ENCODE measurements at regions of chr4 and their contacts with region 1.

Region 1: GRCh38 chr4:76949276-76950051 is at the start of gene SEPTIN11:
- DNase-seq: peak; percentile 93
- ATAC-seq: peak; percentile 82
- H3K4me3 ChIP-seq: peak within 1 kb of the TSS; percentile 57
- H3K27ac ChIP-seq: peak within 1 kb of the TSS; percentile 89
- H3K4me1 ChIP-seq: peaks cover 5% of the 10 kb centered on the region
- H3K27me3 ChIP-seq: no peaks in the 10 kb centered on the region
- CTCF ChIP-seq: no peak
- POLR2A ChIP-seq: peak; percentile 98
- RAD21 ChIP-seq: peak; percentile 17; the same call in 1 of the 2 replicates
- total RNA-seq, gene SEPTIN11: 573 and 632 TPM in 2 replicates

Region 2: GRCh38 chr4:76377911-76378310 is 571.6 kb before region 1 on chr4:
- CTCF ChIA-PET with region 1: no interaction called
- POLR2A ChIA-PET with region 1: no interaction called
- dilution Hi-C with region 1: no loop called
- in situ Hi-C with region 1: no loop called
- intact Hi-C with region 1: no loop called
- DNase-seq: peak; percentile 61
- ATAC-seq: peak; percentile 79
- H3K4me3 ChIP-seq: no peak overlapping the region
- H3K27ac ChIP-seq: no peak overlapping the region
- H3K4me1 ChIP-seq: no peaks in the 10 kb centered on the region
- H3K27me3 ChIP-seq: peaks cover 8% of the 10 kb centered on the region
- CTCF ChIP-seq: peak; percentile 69
- POLR2A ChIP-seq: no peak
- RAD21 ChIP-seq: peak; percentile 61

Region 3: DNA sequence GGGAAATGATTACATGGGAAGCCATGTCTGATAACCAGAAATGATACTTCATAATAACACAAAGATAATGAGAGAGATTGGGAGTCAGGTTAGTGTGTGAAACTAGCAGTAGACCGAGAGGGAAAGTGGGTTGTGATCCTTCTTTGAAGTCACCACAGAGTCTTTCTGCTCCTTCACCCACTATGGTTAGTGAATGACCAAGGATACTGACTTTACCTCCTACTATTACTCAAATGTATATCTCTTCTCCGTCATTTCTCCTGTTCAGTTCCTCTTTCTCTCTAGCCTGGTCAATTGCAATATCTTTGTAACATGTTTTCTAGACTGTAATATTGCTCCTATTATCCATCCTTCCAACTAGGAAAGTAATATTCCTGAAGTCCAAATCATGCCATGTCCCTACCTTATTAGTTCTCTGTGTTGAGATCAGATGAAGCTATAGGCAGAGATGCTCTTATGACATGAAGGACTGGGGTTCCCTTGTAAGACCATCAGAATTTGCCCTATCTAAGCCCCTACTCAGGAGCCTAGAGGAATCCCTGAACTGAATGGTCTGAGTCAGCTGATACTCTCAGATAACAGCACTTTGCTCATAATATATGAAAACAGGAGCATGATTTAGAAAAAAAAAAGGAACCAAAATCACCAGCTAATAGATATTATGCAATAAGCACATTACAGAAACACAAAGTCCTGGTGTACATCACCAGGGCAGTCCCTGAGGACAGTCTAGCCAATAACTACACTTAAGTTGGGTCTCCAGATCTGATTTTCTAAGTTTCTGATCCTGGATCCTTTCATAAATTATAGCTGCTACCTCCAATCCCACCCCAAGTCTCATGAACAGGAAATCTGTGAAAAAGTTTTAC is 433.3 kb before region 1 on chr4:
- CTCF ChIA-PET with region 1: no interaction called
- POLR2A ChIA-PET with region 1: no interaction called
- dilution Hi-C with region 1: no loop called
- in situ Hi-C with region 1: loop called (anchors 10 kb)
- intact Hi-C with region 1: loop called (anchors 1 kb)
- DNase-seq: no peak
- ATAC-seq: no peak
- H3K4me3 ChIP-seq: no peak overlapping the region
- H3K27ac ChIP-seq: no peak overlapping the region
- H3K4me1 ChIP-seq: 0 out of 2 replicates have a peak, but pooled peaks cover 1% of the 10 kb centered on the region
- H3K27me3 ChIP-seq: no peaks in the 10 kb centered on the region
- CTCF ChIP-seq: no peak
- POLR2A ChIP-seq: no peak
- RAD21 ChIP-seq: no peak

Region 4: GRCh38 chr4:76689241-76689817 is 260.1 kb before region 1 on chr4:
- CTCF ChIA-PET with region 1: no interaction called
- POLR2A ChIA-PET with region 1: no interaction called
- dilution Hi-C with region 1: no loop called
- in situ Hi-C with region 1: no loop called
- intact Hi-C with region 1: loop called (anchors 5 kb)
- DNase-seq: peak; percentile 28
- ATAC-seq: peak; percentile 92
- H3K4me3 ChIP-seq: peak overlapping the region; percentile 97
- H3K27ac ChIP-seq: peak overlapping the region; percentile 99
- H3K4me1 ChIP-seq: peaks cover 12% of the 10 kb centered on the region
- H3K27me3 ChIP-seq: no peaks in the 10 kb centered on the region
- CTCF ChIP-seq: peak; percentile 3; the same call in 1 of the 2 replicates
- POLR2A ChIP-seq: peak; percentile 30; the same call in 1 of the 2 replicates
- RAD21 ChIP-seq: peak; percentile 26; the same call in 1 of the 2 replicates

Region 5: GRCh38 chr4:76781698-76782595 is 167.5 kb before region 1 on chr4:
- CTCF ChIA-PET with region 1: no interaction called
- POLR2A ChIA-PET with region 1: interaction called, 4 read pairs
- dilution Hi-C with region 1: no loop called
- in situ Hi-C with region 1: loop called (anchors 10 kb)
- intact Hi-C with region 1: loop called (anchors 1 kb)
- DNase-seq: peak; percentile 98
- ATAC-seq: peak; percentile 80
- H3K4me3 ChIP-seq: peak overlapping the region; percentile 24; the same call in 1 of the 2 replicates
- H3K27ac ChIP-seq: peak overlapping the region; percentile 42
- H3K4me1 ChIP-seq: peaks cover 23% of the 10 kb centered on the region
- H3K27me3 ChIP-seq: no peaks in the 10 kb centered on the region
- CTCF ChIP-seq: no peak
- POLR2A ChIP-seq: peak; percentile 75; the same call in 1 of the 2 replicates
- RAD21 ChIP-seq: no peak

Region 6: GRCh38 chr4:77012726-77013125 is 63.3 kb after region 1 on chr4:
- CTCF ChIA-PET with region 1: interaction called, 3 read pairs
- POLR2A ChIA-PET with region 1: interaction called, 11 read pairs
- dilution Hi-C with region 1: no loop called
- in situ Hi-C with region 1: no loop called
- intact Hi-C with region 1: no loop called
- DNase-seq: no peak
- ATAC-seq: no peak
- H3K4me3 ChIP-seq: no peak overlapping the region
- H3K27ac ChIP-seq: peak overlapping the region; percentile 24; the same call in 1 of the 2 replicates
- H3K4me1 ChIP-seq: peaks cover 19% of the 10 kb centered on the region
- H3K27me3 ChIP-seq: no peaks in the 10 kb centered on the region
- CTCF ChIP-seq: no peak
- POLR2A ChIP-seq: no peak
- RAD21 ChIP-seq: no peak

Region 7: GRCh38 chr4:77036206-77036605 is 86.7 kb after region 1 on chr4:
- CTCF ChIA-PET with region 1: interaction called, 3 read pairs
- POLR2A ChIA-PET with region 1: no interaction called
- dilution Hi-C with region 1: no loop called
- in situ Hi-C with region 1: no loop called
- intact Hi-C with region 1: loop called (anchors 2 kb)
- DNase-seq: peak; percentile 94
- ATAC-seq: peak; percentile 78
- H3K4me3 ChIP-seq: no peak overlapping the region
- H3K27ac ChIP-seq: peak overlapping the region; percentile 36; the same call in 1 of the 2 replicates
- H3K4me1 ChIP-seq: peaks cover 27% of the 10 kb centered on the region
- H3K27me3 ChIP-seq: no peaks in the 10 kb centered on the region
- CTCF ChIP-seq: no peak
- POLR2A ChIP-seq: no peak
- RAD21 ChIP-seq: no peak

Region 8: GRCh38 chr4:77156533-77156911 is 207.1 kb after region 1 on chr4:
- CTCF ChIA-PET with region 1: no interaction called
- POLR2A ChIA-PET with region 1: no interaction called
- dilution Hi-C with region 1: no loop called
- in situ Hi-C with region 1: no loop called
- intact Hi-C with region 1: loop called (anchors 5 kb)
- DNase-seq: peak; percentile 99
- ATAC-seq: peak; percentile 86
- H3K4me3 ChIP-seq: peak overlapping the region; percentile 99
- H3K27ac ChIP-seq: peak overlapping the region; percentile 38
- H3K4me1 ChIP-seq: 0 out of 2 replicates have a peak, but pooled peaks cover 2% of the 10 kb centered on the region
- H3K27me3 ChIP-seq: peaks cover 3% of the 10 kb centered on the region; the same call in 1 of the 2 replicates
- CTCF ChIP-seq: no peak
- POLR2A ChIP-seq: no peak
- RAD21 ChIP-seq: no peak

Measured in IMR-90 (cell line).